ENCODE measurements at regions of chr12 and their contacts with region 1.

Region 1: DNA sequence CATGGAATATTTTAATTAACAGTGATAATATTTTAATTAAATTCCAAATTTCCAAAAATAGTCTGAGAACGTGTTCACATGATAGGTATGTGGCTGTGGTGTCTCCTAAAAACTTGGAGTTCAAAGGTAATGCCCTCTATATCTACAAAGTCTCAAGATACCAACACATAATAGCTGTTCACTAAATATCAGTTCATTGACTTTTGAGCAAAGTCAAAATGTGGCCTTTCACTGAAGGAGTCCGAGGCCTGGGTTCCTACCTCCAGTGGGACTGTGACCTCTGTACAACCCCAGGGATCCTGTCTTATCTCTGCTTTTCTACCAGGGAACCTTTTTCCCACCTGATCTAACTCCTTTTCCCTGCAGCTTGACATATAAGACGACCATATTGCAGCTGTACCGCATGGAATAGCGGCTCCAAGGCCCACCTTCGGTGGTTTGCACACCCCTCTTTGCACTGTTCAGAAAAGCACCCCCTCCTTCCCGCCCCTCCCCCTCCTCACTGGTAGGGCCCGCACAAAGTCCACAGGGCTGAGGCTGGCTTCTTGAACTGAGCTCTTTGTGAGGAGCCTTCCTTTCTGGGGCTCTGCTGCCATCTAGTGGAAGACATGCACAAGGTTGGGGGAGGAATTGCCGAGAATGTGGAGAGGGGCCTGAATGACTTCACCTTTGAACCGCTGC is 3.1 kb downstream of the CCND2 start:
- DNase-seq: peak; percentile 93
- ATAC-seq: peak; percentile 13
- H3K4me3 Mint-ChIP-seq: peak overlapping the region; percentile 99
- H3K27ac Mint-ChIP-seq: peak overlapping the region; percentile 84
- H3K4me1 Mint-ChIP-seq: peaks cover 59% of the 10 kb centered on the region
- H3K27me3 Mint-ChIP-seq: no peaks in the 10 kb centered on the region

Region 2: DNA sequence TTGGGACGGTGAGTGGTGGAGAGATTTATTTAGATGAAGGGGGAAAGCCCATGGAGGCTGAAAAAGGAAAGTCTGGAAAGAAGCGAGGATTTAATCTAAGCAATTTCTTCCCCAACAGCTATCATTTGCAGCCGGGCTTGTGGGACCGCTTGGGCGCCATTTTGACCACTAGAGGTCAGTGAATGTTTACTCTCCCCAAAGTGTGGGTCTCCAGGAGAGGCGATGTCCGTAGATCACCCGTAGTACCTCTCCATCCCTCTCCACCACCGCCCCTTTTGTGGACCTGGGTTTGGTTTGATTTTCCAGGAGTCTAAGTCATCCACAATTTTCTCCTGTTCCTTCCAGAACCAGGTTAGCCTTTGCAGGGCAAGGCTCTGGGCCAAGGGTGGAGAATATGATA is 312.2 kb before region 1 on chr12:
- CTCF ChIA-PET with region 1: interaction called, 41 read pairs
- POLR2A ChIA-PET with region 1: interaction called, 6 read pairs
- DNase-seq: no peak
- ATAC-seq: no peak
- H3K4me3 Mint-ChIP-seq: no peak overlapping the region
- H3K27ac Mint-ChIP-seq: no peak overlapping the region
- H3K4me1 Mint-ChIP-seq: peaks cover 20% of the 10 kb centered on the region
- H3K27me3 Mint-ChIP-seq: peaks cover 2% of the 10 kb centered on the region

Region 3: GRCh38 chr12:4006743-4007142 is 269.9 kb before region 1 on chr12:
- CTCF ChIA-PET with region 1: interaction called, 163 read pairs
- POLR2A ChIA-PET with region 1: no interaction called
- DNase-seq: no peak
- ATAC-seq: no peak
- H3K4me3 Mint-ChIP-seq: no peak overlapping the region
- H3K27ac Mint-ChIP-seq: no peak overlapping the region
- H3K4me1 Mint-ChIP-seq: peaks cover 11% of the 10 kb centered on the region
- H3K27me3 Mint-ChIP-seq: peaks cover 2% of the 10 kb centered on the region

Region 4: GRCh38 chr12:4112734-4113325 is 163.8 kb before region 1 on chr12:
- CTCF ChIA-PET with region 1: interaction called, 132 read pairs
- POLR2A ChIA-PET with region 1: interaction called, 68 read pairs
- DNase-seq: peak; percentile 18
- ATAC-seq: no peak
- H3K4me3 Mint-ChIP-seq: no peak overlapping the region
- H3K27ac Mint-ChIP-seq: no peak overlapping the region
- H3K4me1 Mint-ChIP-seq: peaks cover 84% of the 10 kb centered on the region
- H3K27me3 Mint-ChIP-seq: no peaks in the 10 kb centered on the region

Region 5: DNA sequence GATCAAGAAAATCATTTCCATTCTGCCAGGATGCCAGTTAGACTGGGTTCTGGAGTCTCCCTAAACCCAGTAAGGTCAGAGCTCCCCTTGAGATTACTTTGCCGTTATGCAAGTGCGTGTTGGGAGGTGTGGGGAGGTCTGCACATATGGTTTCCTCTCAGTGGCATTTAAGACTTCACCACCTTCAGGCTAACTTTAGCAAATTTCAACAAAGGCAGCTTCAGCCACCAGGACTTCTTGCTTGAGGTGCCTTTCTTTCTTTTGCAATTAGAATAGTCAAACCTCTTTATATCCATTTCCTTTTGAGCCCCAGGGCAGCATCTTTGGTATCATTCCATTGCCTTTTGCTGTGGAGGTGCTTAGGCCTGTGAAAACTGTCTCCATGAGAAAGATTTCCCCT is 120.3 kb before region 1 on chr12:
- CTCF ChIA-PET with region 1: interaction called, 23 read pairs
- POLR2A ChIA-PET with region 1: interaction called, 78 read pairs
- DNase-seq: no peak
- ATAC-seq: no peak
- H3K4me3 Mint-ChIP-seq: no peak overlapping the region
- H3K27ac Mint-ChIP-seq: peak overlapping the region; percentile 84
- H3K4me1 Mint-ChIP-seq: peaks cover 92% of the 10 kb centered on the region
- H3K27me3 Mint-ChIP-seq: no peaks in the 10 kb centered on the region

Region 6: DNA sequence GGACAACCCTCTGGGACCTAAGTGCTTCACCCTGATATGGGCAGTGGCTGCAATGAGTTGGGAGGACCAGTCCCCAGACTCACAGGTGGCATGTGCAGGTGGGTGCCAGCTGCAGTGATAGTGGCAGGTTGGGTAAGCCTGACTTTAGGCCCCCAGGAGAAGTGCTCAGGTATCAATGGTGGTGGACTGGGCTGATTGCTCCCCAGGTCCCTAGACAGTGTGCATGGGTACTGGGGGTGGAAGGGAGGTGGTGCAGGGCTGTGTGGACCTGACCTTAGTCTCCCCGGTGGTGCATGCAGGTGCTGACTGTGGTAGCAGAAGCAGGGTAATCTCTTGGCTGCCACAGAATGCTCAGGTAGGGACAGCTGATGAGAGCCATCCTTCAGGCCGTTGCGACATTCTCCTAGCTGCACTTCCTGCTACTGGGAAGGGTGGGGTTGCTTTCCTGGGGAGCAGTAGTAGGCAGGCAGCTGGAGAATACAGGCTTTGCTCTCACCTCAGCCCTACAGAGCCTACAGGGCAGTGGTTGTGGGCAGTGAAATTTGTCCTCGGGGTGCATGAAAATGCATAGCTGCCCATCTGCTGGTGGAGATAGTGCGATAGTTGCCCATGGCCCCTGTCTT is 36.4 kb before region 1 on chr12:
- CTCF ChIA-PET with region 1: no interaction called
- POLR2A ChIA-PET with region 1: no interaction called
- DNase-seq: no peak
- ATAC-seq: no peak
- H3K4me3 Mint-ChIP-seq: no peak overlapping the region
- H3K27ac Mint-ChIP-seq: no peak overlapping the region
- H3K4me1 Mint-ChIP-seq: peaks cover 29% of the 10 kb centered on the region
- H3K27me3 Mint-ChIP-seq: peaks cover 24% of the 10 kb centered on the region

Region 7: GRCh38 chr12:4261655-4262054 is 15.0 kb before region 1 on chr12:
- CTCF ChIA-PET with region 1: interaction called, 16 read pairs
- POLR2A ChIA-PET with region 1: interaction called, 3 read pairs
- DNase-seq: no peak
- ATAC-seq: no peak
- H3K4me3 Mint-ChIP-seq: no peak overlapping the region
- H3K27ac Mint-ChIP-seq: no peak overlapping the region
- H3K4me1 Mint-ChIP-seq: peaks cover 2% of the 10 kb centered on the region
- H3K27me3 Mint-ChIP-seq: peaks cover 8% of the 10 kb centered on the region

Region 8: GRCh38 chr12:4819654-4820053 is 543.0 kb after region 1 on chr12:
- CTCF ChIA-PET with region 1: no interaction called
- POLR2A ChIA-PET with region 1: no interaction called
- DNase-seq: no peak
- ATAC-seq: no peak
- H3K4me3 Mint-ChIP-seq: no peak overlapping the region
- H3K27ac Mint-ChIP-seq: no peak overlapping the region
- H3K4me1 Mint-ChIP-seq: peaks cover 29% of the 10 kb centered on the region
- H3K27me3 Mint-ChIP-seq: peaks cover 6% of the 10 kb centered on the region